Caco-2 (cell line): ENCODE measurements at regions of chr3 and their contacts with region 1.

Region 1: DNA sequence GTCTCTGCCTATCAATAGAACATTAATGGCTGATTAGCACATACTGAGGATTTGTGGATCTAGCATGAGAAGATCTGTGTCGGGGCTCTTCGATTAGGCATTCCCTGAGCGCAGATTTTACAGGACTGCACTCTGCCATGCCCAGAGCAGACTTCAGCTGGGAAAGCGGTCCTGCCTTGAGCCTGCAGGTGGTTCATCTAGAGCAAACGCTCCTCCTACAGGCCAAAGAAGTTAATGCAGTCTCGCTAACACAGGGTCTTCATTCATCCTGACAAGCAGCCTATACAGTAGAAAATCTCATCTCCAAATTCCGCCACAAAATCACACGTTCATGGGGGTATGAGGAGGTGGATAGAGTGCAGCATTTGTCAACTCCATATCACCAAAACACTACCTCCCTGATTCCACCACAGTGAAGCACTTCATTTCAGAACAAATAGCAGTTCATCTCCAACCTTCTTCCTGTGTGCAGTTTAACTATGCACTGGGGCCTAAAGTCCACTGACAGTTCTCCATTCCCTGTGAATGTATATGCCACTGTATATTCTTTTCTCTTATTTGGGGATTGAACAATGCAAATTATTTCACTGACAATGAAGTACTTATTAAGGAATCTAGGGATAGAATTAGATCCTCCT is 405.8 kb downstream of the IGSF11 start:
- DNase-seq: peak; percentile 83 to 85
- H3K4me3 ChIP-seq: no peak overlapping the region
- H3K4me3 Mint-ChIP-seq: no peak overlapping the region
- H3K27ac Mint-ChIP-seq: peak overlapping the region; percentile 42
- H3K4me1 ChIP-seq: peaks cover 15% of the 10 kb centered on the region
- H3K4me1 Mint-ChIP-seq: peaks cover 6% of the 10 kb centered on the region
- H3K27me3 ChIP-seq: no peaks in the 10 kb centered on the region
- H3K27me3 Mint-ChIP-seq: no peaks in the 10 kb centered on the region
- CTCF ChIP-seq: peak; percentile 84 to 88

Region 2: DNA sequence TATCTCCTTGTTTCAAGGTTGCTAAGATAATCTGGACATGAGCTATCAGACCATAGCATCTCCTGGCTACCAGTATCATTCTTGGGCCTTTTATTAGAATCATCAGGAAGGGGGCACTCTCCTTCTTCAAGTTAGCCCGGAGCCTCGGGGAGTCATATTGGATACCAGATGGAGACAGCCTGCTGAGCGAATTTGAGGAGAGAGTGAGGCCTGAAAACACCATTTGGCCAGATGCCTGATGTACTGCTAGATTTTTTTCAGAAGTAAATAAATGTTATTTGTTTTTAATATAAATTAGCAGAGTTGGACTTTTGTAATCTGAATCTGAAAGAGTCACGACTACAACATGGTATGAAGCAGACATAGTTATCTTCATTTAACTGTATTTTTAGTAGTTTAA is 442.8 kb before region 1 on chr3:
- CTCF ChIA-PET with region 1: no interaction called
- POLR2A ChIA-PET with region 1: no interaction called
- intact Hi-C with region 1: loop called (anchors 2 kb)
- DNase-seq: no peak
- H3K4me3 ChIP-seq: no peak overlapping the region
- H3K4me3 Mint-ChIP-seq: no peak overlapping the region
- H3K27ac Mint-ChIP-seq: no peak overlapping the region
- H3K4me1 ChIP-seq: no peaks in the 10 kb centered on the region
- H3K4me1 Mint-ChIP-seq: no peaks in the 10 kb centered on the region
- H3K27me3 ChIP-seq: no peaks in the 10 kb centered on the region
- H3K27me3 Mint-ChIP-seq: no peaks in the 10 kb centered on the region
- CTCF ChIP-seq: no peak

Region 3: DNA sequence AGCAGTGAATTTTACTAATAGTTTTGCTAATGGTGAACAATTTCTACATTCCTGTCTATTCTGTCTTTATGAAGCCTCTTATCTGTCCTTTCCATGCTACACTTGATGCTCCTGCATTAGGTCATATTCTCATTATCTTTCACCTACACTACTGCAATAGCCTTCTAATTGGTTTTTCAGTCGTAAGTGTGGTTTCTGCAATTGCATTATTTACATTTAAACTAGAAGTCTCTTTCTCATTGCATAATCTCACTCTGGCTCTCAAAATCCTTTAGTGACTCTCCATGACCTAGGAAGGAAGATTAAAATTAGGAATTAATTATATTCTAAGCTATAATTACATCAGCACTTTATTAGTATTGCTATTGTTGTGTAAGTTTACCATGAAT is 280.7 kb before region 1 on chr3:
- CTCF ChIA-PET with region 1: no interaction called
- POLR2A ChIA-PET with region 1: no interaction called
- intact Hi-C with region 1: loop called (anchors 1 kb)
- DNase-seq: no peak
- H3K4me3 ChIP-seq: no peak overlapping the region
- H3K4me3 Mint-ChIP-seq: no peak overlapping the region
- H3K27ac Mint-ChIP-seq: no peak overlapping the region
- H3K4me1 ChIP-seq: peaks cover 10% of the 10 kb centered on the region; the same call in 1 of the 2 replicates
- H3K4me1 Mint-ChIP-seq: no peaks in the 10 kb centered on the region
- H3K27me3 ChIP-seq: no peaks in the 10 kb centered on the region
- H3K27me3 Mint-ChIP-seq: no peaks in the 10 kb centered on the region
- CTCF ChIP-seq: no peak

Region 4: DNA sequence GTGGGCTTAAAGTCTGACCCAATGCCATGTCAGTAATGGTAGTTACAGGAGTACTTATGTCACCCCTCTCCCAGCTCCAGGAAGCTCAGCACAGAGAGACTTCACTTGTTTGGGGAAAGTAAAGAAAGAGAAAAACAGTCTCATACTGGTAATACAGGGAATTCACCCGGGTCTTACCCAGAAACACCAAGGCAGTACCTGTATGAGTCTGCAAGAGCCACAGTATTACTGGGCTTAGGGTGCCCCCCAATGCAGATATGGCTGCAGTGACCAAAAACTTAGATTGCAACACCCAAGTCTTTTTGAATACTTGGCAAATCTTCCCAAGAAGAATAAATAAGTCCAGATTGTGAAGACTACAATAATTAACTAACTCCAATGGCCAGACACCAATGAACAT is 216.3 kb before region 1 on chr3:
- CTCF ChIA-PET with region 1: no interaction called
- POLR2A ChIA-PET with region 1: no interaction called
- intact Hi-C with region 1: loop called (anchors 1 kb)
- DNase-seq: peak in 1 of 2 experiments; percentile 6
- H3K4me3 ChIP-seq: no peak overlapping the region
- H3K4me3 Mint-ChIP-seq: no peak overlapping the region
- H3K27ac Mint-ChIP-seq: no peak overlapping the region
- H3K4me1 ChIP-seq: no peaks in the 10 kb centered on the region
- H3K4me1 Mint-ChIP-seq: no peaks in the 10 kb centered on the region
- H3K27me3 ChIP-seq: no peaks in the 10 kb centered on the region
- H3K27me3 Mint-ChIP-seq: no peaks in the 10 kb centered on the region
- CTCF ChIP-seq: no peak

Region 5: GRCh38 chr3:118511402-118511801 is 117.4 kb before region 1 on chr3:
- CTCF ChIA-PET with region 1: no interaction called
- POLR2A ChIA-PET with region 1: no interaction called
- intact Hi-C with region 1: no loop called
- DNase-seq: no peak
- H3K4me3 ChIP-seq: no peak overlapping the region
- H3K4me3 Mint-ChIP-seq: no peak overlapping the region
- H3K27ac Mint-ChIP-seq: no peak overlapping the region
- H3K4me1 ChIP-seq: peaks cover 5% of the 10 kb centered on the region; the same call in 1 of the 2 replicates
- H3K4me1 Mint-ChIP-seq: peaks cover 6% of the 10 kb centered on the region
- H3K27me3 ChIP-seq: no peaks in the 10 kb centered on the region
- H3K27me3 Mint-ChIP-seq: no peaks in the 10 kb centered on the region
- CTCF ChIP-seq: no peak

Region 6: GRCh38 chr3:118544458-118544857 is 84.4 kb before region 1 on chr3:
- CTCF ChIA-PET with region 1: no interaction called
- POLR2A ChIA-PET with region 1: no interaction called
- intact Hi-C with region 1: loop called (anchors 1 kb)
- DNase-seq: no peak
- H3K4me3 ChIP-seq: no peak overlapping the region
- H3K4me3 Mint-ChIP-seq: no peak overlapping the region
- H3K27ac Mint-ChIP-seq: peak overlapping the region; percentile 22
- H3K4me1 ChIP-seq: peaks cover 34% of the 10 kb centered on the region
- H3K4me1 Mint-ChIP-seq: peaks cover 48% of the 10 kb centered on the region
- H3K27me3 ChIP-seq: no peaks in the 10 kb centered on the region
- H3K27me3 Mint-ChIP-seq: no peaks in the 10 kb centered on the region
- CTCF ChIP-seq: no peak

Region 7: DNA sequence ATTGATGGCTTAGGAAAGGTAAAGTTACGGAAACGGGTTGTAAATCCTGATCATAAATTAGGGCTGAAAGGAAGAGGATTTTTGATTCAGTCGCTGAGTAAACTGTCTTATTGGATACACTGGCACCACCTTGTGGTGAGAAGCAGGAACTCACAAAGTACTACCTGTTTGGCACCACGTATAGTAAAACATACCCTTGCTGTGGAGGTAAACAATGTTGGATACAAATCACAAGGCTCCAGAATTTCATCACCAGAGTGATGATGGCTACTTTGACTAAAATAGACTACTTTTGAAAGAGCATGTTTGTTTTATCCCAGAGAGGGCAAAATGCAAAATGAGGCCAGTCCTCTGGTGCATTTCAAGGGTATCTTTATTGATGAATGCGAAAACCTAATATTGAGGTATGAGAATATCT is 188.9 kb after region 1 on chr3:
- CTCF ChIA-PET with region 1: no interaction called
- POLR2A ChIA-PET with region 1: no interaction called
- intact Hi-C with region 1: loop called (anchors 2 kb)
- DNase-seq: peak; percentile 54 to 60
- H3K4me3 ChIP-seq: no peak overlapping the region
- H3K4me3 Mint-ChIP-seq: no peak overlapping the region
- H3K27ac Mint-ChIP-seq: no peak overlapping the region
- H3K4me1 ChIP-seq: no peaks in the 10 kb centered on the region
- H3K4me1 Mint-ChIP-seq: no peaks in the 10 kb centered on the region
- H3K27me3 ChIP-seq: no peaks in the 10 kb centered on the region
- H3K27me3 Mint-ChIP-seq: peaks cover 3% of the 10 kb centered on the region
- CTCF ChIP-seq: peak; percentile 81 to 86